ENCODE measurements at regions of chr16 and their contacts with region 1.

Region 1: GRCh38 chr16:50747207-50747956 is 5.5 kb downstream of the CYLD start:
- DNase-seq: no peak
- ATAC-seq: peak; percentile 74
- H3K4me3 Mint-ChIP-seq: peak overlapping the region; percentile 90
- H3K27ac Mint-ChIP-seq: peak overlapping the region; percentile 97
- H3K4me1 Mint-ChIP-seq: peaks cover 58% of the 10 kb centered on the region
- H3K27me3 Mint-ChIP-seq: no peaks in the 10 kb centered on the region

Region 2: GRCh38 chr16:50731130-50731988 is 16.0 kb before region 1 on chr16:
- POLR2A ChIA-PET with region 1: interaction called, 17 read pairs
- DNase-seq: no peak
- ATAC-seq: peak; percentile 80
- H3K4me3 Mint-ChIP-seq: peak overlapping the region; percentile 29
- H3K27ac Mint-ChIP-seq: peak overlapping the region; percentile 78
- H3K4me1 Mint-ChIP-seq: peaks cover 6% of the 10 kb centered on the region
- H3K27me3 Mint-ChIP-seq: no peaks in the 10 kb centered on the region

Region 3: GRCh38 chr16:50763211-50763610 is 15.8 kb after region 1 on chr16:
- POLR2A ChIA-PET with region 1: no interaction called
- DNase-seq: no peak
- ATAC-seq: no peak
- H3K4me3 Mint-ChIP-seq: no peak overlapping the region
- H3K27ac Mint-ChIP-seq: no peak overlapping the region
- H3K4me1 Mint-ChIP-seq: peaks cover 42% of the 10 kb centered on the region
- H3K27me3 Mint-ChIP-seq: no peaks in the 10 kb centered on the region